ENCODE measurements at regions of chr17 and their contacts with region 1.

Region 1: DNA sequence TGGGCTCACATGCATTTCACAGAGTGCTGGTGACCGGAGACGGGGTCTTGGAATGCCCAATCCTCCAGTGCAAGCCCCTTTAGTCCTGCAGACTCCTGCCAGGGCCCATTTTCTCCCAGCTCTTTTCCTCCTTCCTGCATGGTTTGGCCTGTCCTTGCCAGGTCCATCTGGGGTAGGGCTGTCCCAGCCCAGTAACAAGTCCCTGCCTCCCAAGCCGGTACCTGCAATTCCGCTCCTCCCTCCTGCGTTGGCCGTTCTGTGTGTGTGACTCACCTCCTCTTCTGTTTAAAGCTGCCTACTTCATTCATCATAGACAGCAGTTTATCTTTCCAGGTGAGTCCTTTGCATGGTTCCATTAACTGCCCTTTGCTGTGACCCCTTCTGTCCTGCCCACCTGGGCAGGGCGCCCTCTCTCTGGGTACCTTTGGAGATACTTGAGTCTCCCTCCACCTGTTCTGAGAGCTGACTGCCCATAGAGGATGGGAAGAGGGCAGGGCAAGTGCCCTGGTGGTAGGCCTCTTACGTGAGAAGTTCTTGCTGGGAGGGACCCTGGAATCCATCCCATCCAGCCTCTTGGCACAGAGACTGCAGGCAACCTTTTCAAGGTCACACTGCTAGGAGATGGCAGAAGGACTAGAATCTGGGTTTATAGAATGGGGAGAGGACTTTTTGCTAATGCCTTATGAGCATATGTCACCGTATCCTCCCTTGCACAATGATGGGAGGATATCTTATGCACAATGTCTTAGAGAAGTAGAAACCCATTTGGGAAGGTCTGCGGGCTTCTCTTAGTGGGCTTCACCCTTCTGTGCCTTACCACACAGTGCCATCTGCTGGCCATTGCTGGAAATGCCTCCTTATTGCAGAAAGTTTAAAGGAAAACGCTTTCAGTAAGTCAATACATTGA is 29.7 kb upstream of the LGALS9 start:
- DNase-seq: peak; percentile 90 to 94
- H3K4me3 ChIP-seq: no peak overlapping the region
- H3K4me3 Mint-ChIP-seq: no peak overlapping the region
- H3K27ac Mint-ChIP-seq: peak overlapping the region; percentile 11
- H3K4me1 ChIP-seq: no peaks in the 10 kb centered on the region
- H3K4me1 Mint-ChIP-seq: peaks cover 6% of the 10 kb centered on the region
- H3K27me3 ChIP-seq: no peaks in the 10 kb centered on the region
- H3K27me3 Mint-ChIP-seq: no peaks in the 10 kb centered on the region
- CTCF ChIP-seq: peak; percentile 99 to 100

Region 2: DNA sequence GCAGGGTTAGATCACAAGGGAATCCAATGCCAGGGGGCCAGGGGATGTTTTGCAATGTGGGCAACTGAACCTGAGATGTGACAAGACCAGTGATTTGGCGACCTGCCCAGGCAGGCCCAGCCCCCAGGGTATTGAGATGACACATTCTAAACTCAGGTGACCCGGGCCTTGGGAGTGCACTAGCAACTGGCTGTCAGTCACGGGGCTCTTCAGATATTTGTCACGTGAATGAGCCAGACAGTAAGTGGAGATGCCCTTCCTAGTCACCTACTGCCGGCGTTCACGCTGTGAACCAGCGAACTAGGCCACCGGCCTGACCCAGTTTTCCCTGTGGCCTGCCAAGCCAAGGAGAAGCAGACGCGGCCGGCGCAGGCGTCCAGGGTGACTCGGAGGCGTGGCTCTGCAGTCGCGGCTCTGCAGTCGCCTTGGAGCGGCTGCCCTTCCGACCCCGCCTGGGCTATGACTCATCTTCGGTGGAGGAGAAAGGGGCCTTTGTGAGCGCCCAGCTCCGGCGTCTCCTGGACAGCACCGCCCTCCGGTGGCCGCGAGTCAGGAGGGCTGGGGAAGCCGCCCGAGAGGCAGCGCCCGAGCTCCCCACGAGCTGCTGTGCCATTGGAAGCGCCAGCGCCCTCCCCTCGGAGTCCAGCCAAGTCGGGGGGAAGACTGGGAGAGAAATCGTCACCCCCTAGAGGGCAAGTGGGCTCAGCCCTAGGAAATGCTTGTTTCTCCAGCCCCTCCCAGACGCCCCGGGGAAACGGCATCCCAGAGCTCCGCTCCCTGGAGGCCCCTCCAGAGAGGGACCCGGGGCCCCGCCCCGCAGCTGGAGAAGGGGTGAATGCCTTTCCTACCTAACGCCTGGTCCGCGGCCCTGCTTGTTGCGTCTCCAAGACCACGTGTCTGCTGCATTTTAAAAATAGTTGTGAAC is 268.6 kb before region 1 on chr17:
- CTCF ChIA-PET with region 1: no interaction called
- POLR2A ChIA-PET with region 1: no interaction called
- intact Hi-C with region 1: loop called (anchors 1 kb)
- DNase-seq: peak; percentile 99
- H3K4me3 ChIP-seq: peak overlapping the region; percentile 44
- H3K4me3 Mint-ChIP-seq: peak overlapping the region; percentile 73
- H3K27ac Mint-ChIP-seq: peak overlapping the region; percentile 93
- H3K4me1 ChIP-seq: peaks cover 10% of the 10 kb centered on the region
- H3K4me1 Mint-ChIP-seq: peaks cover 26% of the 10 kb centered on the region
- H3K27me3 ChIP-seq: no peaks in the 10 kb centered on the region
- H3K27me3 Mint-ChIP-seq: no peaks in the 10 kb centered on the region
- CTCF ChIP-seq: peak; percentile 93 to 94

Region 3: GRCh38 chr17:27430882-27431491 is 170.3 kb before region 1 on chr17:
- CTCF ChIA-PET with region 1: interaction called, 4 read pairs
- POLR2A ChIA-PET with region 1: no interaction called
- intact Hi-C with region 1: loop called (anchors 1 kb)
- DNase-seq: peak; percentile 80 to 84
- H3K4me3 ChIP-seq: no peak overlapping the region
- H3K4me3 Mint-ChIP-seq: no peak overlapping the region
- H3K27ac Mint-ChIP-seq: no peak overlapping the region
- H3K4me1 ChIP-seq: 0 out of 2 replicates have a peak, but pooled peaks cover 7% of the 10 kb centered on the region
- H3K4me1 Mint-ChIP-seq: no peaks in the 10 kb centered on the region
- H3K27me3 ChIP-seq: 0 out of 2 replicates have a peak, but pooled peaks cover 1% of the 10 kb centered on the region
- H3K27me3 Mint-ChIP-seq: no peaks in the 10 kb centered on the region
- CTCF ChIP-seq: peak; percentile 94 to 98

Region 4: GRCh38 chr17:27494192-27495091 is 106.9 kb before region 1 on chr17:
- CTCF ChIA-PET with region 1: interaction called, 87 read pairs
- POLR2A ChIA-PET with region 1: no interaction called
- intact Hi-C with region 1: loop called (anchors 1 kb)
- DNase-seq: peak; percentile 92 to 94
- H3K4me3 ChIP-seq: peak overlapping the region; percentile 32
- H3K4me3 Mint-ChIP-seq: peak overlapping the region; percentile 82
- H3K27ac Mint-ChIP-seq: peak overlapping the region; percentile 92
- H3K4me1 ChIP-seq: peaks cover 73% of the 10 kb centered on the region
- H3K4me1 Mint-ChIP-seq: peaks cover 75% of the 10 kb centered on the region
- H3K27me3 ChIP-seq: no peaks in the 10 kb centered on the region
- H3K27me3 Mint-ChIP-seq: no peaks in the 10 kb centered on the region
- CTCF ChIP-seq: peak; percentile 88 to 99

Region 5: GRCh38 chr17:27569257-27569722 is 32.0 kb before region 1 on chr17:
- CTCF ChIA-PET with region 1: interaction called, 7 read pairs
- POLR2A ChIA-PET with region 1: no interaction called
- intact Hi-C with region 1: loop called (anchors 1 kb)
- DNase-seq: peak; percentile 89
- H3K4me3 ChIP-seq: no peak overlapping the region
- H3K4me3 Mint-ChIP-seq: no peak overlapping the region
- H3K27ac Mint-ChIP-seq: peak overlapping the region; percentile 83
- H3K4me1 ChIP-seq: peaks cover 54% of the 10 kb centered on the region
- H3K4me1 Mint-ChIP-seq: peaks cover 42% of the 10 kb centered on the region
- H3K27me3 ChIP-seq: no peaks in the 10 kb centered on the region
- H3K27me3 Mint-ChIP-seq: no peaks in the 10 kb centered on the region
- CTCF ChIP-seq: peak; percentile 97 to 98

Region 6: GRCh38 chr17:27654654-27655524 is 53.6 kb after region 1 on chr17:
- CTCF ChIA-PET with region 1: interaction called, 30 read pairs
- POLR2A ChIA-PET with region 1: no interaction called
- intact Hi-C with region 1: loop called (anchors 1 kb)
- DNase-seq: peak; percentile 97 to 98
- H3K4me3 ChIP-seq: no peak overlapping the region
- H3K4me3 Mint-ChIP-seq: no peak overlapping the region
- H3K27ac Mint-ChIP-seq: no peak overlapping the region
- H3K4me1 ChIP-seq: no peaks in the 10 kb centered on the region
- H3K4me1 Mint-ChIP-seq: peaks cover 8% of the 10 kb centered on the region
- H3K27me3 ChIP-seq: no peaks in the 10 kb centered on the region
- H3K27me3 Mint-ChIP-seq: peaks cover 3% of the 10 kb centered on the region
- CTCF ChIP-seq: peak; percentile 99 to 100

Region 7: GRCh38 chr17:27670791-27671590 is 69.7 kb after region 1 on chr17:
- CTCF ChIA-PET with region 1: no interaction called
- POLR2A ChIA-PET with region 1: no interaction called
- intact Hi-C with region 1: no loop called
- DNase-seq: peak in 1 of 2 experiments; percentile 47
- H3K4me3 ChIP-seq: no peak overlapping the region
- H3K4me3 Mint-ChIP-seq: no peak overlapping the region
- H3K27ac Mint-ChIP-seq: no peak overlapping the region
- H3K4me1 ChIP-seq: no peaks in the 10 kb centered on the region
- H3K4me1 Mint-ChIP-seq: no peaks in the 10 kb centered on the region
- H3K27me3 ChIP-seq: 0 out of 2 replicates have a peak, but pooled peaks cover 1% of the 10 kb centered on the region
- H3K27me3 Mint-ChIP-seq: peaks cover 3% of the 10 kb centered on the region
- CTCF ChIP-seq: no peak

Measured in Caco-2 (cell line).